H1 (cell line): ENCODE measurements at regions of chr1 and their contacts with region 1.

Region 1: DNA sequence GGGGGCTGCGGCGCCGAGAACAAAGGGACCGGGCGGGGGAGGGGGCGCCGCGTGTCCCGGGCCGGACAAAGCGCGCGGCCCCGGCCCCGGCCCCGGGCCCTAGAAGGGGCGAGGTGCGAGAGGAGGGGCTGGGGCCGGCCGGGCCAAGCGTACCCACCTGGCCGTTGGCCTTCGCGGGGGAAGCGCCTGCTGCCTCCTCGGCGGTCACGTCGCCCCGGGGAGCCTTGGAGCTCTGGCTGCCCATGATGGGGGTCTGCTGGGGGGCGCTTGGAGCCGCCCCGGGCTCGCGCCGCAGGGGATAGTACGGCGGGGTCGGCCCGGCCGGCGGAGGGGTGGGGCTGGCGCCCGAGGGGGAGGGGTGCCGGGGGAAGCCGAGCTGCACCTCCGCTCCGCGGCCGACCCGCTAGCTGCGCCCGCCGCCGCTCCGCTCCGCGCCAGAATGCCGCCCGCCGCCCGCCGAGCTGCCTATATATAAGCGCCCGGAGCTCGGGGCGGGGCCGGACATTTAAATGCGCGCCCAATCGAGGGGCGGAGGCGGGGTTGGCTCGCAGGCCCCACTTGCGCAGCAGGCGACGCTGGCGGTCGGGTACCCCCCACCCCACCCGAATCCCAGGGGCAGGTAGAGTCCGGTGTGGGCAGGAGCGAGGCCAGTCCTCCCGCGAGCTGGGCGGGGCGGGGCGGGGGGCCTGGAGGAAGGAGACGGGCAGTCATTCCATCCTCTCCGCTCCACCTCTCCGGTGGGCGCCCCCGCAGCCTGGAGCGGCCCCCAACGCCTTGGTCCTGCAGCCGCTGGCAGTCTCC is at the start of gene MARCKSL1:
- DNase-seq: peak; percentile 27 to 94
- H3K4me3 ChIP-seq: peak within 1 kb of the TSS; percentile 92 to 94 (median 93)
- H3K27ac ChIP-seq: peak within 1 kb of the TSS; percentile 92
- H3K4me1 ChIP-seq: peaks cover 5 to 34% (median 25%) of the 10 kb centered on the region in 4 experiments
- H3K27me3 ChIP-seq: peaks cover 0 to 7% (median 2%) of the 10 kb centered on the region in 4 experiments; a peak in 4 of 7 replicates
- CTCF ChIP-seq: no peak
- EP300 ChIP-seq: no peak
- POLR2A ChIP-seq: peak in 1 of 2 experiments; percentile 98; a peak in 2 of 3 replicates
- RAD21 ChIP-seq: no peak
- total RNA-seq, gene MARCKSL1: 536 and 557 TPM in 2 replicates

Region 2: DNA sequence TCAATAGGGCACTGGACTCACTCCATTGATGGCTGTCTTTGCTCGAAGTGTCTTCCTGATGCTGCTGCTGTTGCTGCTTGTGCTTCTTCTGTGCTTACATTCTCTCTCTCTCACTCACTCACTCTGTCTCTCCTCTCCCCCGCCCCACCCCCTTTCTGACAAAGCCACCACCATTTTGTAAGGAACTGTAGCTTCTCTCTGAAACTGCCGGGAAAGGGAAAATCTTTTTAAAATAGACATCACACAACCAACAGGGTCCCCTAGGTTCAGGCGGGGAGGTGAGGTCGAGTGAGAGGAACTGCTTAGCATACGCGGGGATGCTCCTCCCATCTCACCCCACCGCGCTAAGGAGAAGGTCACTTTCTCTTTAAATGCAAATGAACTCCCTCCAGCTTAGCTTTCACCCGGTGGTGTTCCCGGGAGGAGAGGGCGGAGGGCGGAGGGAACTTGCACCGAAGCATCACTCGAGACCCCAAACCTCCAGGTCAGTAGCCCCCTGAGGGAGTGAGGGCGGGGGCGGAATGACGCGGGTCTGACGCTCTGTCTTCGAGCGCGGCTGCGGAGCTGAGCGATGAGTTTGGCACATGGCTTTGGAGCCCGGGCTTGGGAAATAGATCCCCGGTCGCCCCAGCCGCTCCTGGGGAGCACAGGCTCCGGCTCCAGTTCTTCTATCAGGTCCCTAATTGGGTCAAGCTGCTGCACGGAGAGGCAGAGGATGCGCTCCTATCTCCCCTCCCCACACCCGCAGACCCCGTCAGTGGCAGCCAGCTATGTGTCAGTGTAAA is 135.6 kb before region 1 on chr1 and contains the start of gene CCDC28B:
- CTCF ChIA-PET with region 1: interaction called, 3 read pairs
- POLR2A ChIA-PET with region 1: interaction called, 47 read pairs
- DNase-seq: peak in 1 of 2 experiments; percentile 82
- H3K4me3 ChIP-seq: peak within 1 kb of the TSS; percentile 47 to 67 (median 62)
- H3K27ac ChIP-seq: peak within 1 kb of the TSS; percentile 5; the same call in 1 of the 2 replicates
- H3K4me1 ChIP-seq: peaks cover 13 to 31% (median 20%) of the 10 kb centered on the region in 4 experiments
- H3K27me3 ChIP-seq: peaks cover 0 to 4% (median 2%) of the 10 kb centered on the region in 4 experiments; a peak in 3 of 7 replicates
- CTCF ChIP-seq: no peak
- EP300 ChIP-seq: no peak
- POLR2A ChIP-seq: no peak
- RAD21 ChIP-seq: no peak
- total RNA-seq, gene CCDC28B: 17.1 and 20.9 TPM in 2 replicates

Region 3: GRCh38 chr1:32247983-32248889 is 87.8 kb before region 1 on chr1:
- CTCF ChIA-PET with region 1: interaction called, 4 read pairs
- POLR2A ChIA-PET with region 1: interaction called, 50 read pairs
- DNase-seq: peak; percentile 83 to 97
- H3K4me3 ChIP-seq: peak overlapping the region; percentile 1 to 55 (median 14); a peak in 4 of 8 replicates
- H3K27ac ChIP-seq: no peak overlapping the region
- H3K4me1 ChIP-seq: peaks cover 6 to 13% (median 8%) of the 10 kb centered on the region in 4 experiments
- H3K27me3 ChIP-seq: no peaks in the 10 kb centered on the region; a peak in 1 of 7 replicates
- CTCF ChIP-seq: peak; percentile 81 to 98 (median 96)
- EP300 ChIP-seq: no peak
- POLR2A ChIP-seq: no peak
- RAD21 ChIP-seq: peak; percentile 64 to 71

Region 4: GRCh38 chr1:32321712-32322291 is 14.2 kb before region 1 on chr1:
- CTCF ChIA-PET with region 1: interaction called, 8 read pairs
- POLR2A ChIA-PET with region 1: interaction called, 321 read pairs
- DNase-seq: no peak
- H3K4me3 ChIP-seq: no peak overlapping the region
- H3K27ac ChIP-seq: no peak overlapping the region
- H3K4me1 ChIP-seq: no peaks in the 10 kb centered on the region
- H3K27me3 ChIP-seq: no peaks in the 10 kb centered on the region
- CTCF ChIP-seq: no peak
- EP300 ChIP-seq: no peak
- POLR2A ChIP-seq: no peak
- RAD21 ChIP-seq: no peak

Region 5: GRCh38 chr1:32361674-32362473 is 25.9 kb after region 1 on chr1:
- CTCF ChIA-PET with region 1: interaction called, 4 read pairs
- POLR2A ChIA-PET with region 1: interaction called, 68 read pairs
- DNase-seq: peak in 1 of 2 experiments; percentile 82
- H3K4me3 ChIP-seq: peak overlapping the region; percentile 11 to 53 (median 26)
- H3K27ac ChIP-seq: no peak overlapping the region
- H3K4me1 ChIP-seq: peaks cover 0 to 3% (median 1%) of the 10 kb centered on the region in 4 experiments; a peak in 4 of 7 replicates
- H3K27me3 ChIP-seq: peaks cover 3 to 24% (median 14%) of the 10 kb centered on the region in 4 experiments
- CTCF ChIP-seq: peak in 2 of 3 experiments; percentile 21 to 23; a peak in 2 of 4 replicates
- EP300 ChIP-seq: no peak
- POLR2A ChIP-seq: peak; percentile 17 to 51; a peak in 2 of 3 replicates
- RAD21 ChIP-seq: no peak; a peak in 1 of 4 replicates